ENCODE measurements at regions of chr1 and their contacts with region 1.

Region 1: DNA sequence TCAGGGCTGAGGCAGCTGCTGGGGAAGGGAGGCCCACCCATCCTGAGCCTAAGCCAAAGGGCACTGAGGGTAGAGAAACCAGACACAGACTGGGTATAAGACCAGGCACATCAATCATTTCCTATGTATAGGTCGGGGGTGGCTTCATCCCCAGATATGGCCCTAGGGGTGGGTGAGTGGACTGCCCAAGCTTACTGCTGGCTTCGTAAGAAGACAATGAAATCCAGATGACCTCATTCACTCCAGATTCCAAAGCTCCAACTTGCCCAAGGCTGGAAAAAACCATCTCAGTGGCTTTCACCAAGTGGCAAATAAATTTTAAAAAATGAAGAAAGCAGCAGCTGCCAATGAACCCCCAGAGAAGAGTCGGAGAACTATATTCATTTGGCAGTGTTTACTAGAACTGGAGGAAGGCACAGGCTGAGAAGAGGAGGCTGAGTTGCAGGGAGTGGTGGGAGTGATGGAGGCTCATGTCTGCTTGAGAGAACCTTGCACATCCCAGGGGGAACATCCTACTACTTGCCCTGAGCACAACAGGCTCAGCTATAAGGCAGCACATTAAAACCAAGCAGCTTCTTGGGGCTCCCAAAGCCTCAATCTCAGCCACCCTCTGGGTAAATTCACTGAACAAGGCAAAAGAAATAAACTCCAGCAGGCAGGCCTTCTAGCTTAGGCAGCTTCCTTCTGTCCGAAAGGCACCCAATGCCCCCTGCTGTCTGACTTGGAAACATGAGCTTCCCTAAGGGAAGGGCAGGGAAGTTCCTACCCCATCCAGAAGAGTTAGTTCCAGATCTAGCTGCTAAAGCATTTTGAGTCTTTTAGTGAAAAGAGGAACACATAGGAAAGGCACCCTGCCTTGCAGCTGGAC is 14.1 kb downstream of the PEA15 start:
- DNase-seq: peak; percentile 28 to 49
- ATAC-seq: peak; percentile 57

Region 2: DNA sequence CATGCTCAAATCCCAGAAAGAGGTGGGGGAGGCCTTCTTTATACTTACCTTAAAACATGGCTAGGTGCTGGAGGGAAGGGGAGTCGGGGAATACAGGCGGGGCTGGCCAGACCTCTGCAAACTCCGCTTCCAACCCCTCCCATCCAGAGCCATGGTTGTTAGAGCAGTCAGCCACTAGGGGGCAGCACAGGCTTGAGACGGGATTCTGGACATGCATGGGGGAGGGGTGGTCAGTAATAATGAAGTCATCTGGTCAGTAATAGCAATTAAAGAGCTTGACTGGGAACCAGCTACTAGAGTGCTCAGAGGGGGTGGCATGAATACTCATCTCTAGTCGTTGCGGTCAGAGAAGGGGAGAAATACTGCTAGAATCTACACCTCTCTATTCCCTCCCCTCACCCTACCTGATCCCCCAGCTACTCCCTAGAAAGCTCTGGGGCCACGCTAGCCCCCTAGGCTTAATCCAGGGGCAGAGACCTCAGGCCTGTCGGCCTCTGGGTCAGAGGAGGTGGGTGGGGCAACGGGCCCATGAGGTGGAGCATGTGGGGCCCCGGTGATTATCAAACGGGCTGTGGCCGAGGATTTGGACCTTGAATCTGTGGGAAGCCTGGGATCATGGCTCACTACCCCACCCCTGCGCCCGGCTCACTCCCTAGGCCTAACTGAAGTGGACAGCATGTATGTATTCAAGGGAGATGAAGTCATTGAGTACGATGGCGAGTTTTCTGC is 26.0 kb before region 1 on chr1:
- intact Hi-C with region 1: loop called in 1 of 2 experiments (anchors 2 kb)
- DNase-seq: peak; percentile 62 to 85
- ATAC-seq: peak; percentile 92